AG04450 (cell line): ENCODE measurements at regions of chr14 and their contacts with region 1.

Region 1: DNA sequence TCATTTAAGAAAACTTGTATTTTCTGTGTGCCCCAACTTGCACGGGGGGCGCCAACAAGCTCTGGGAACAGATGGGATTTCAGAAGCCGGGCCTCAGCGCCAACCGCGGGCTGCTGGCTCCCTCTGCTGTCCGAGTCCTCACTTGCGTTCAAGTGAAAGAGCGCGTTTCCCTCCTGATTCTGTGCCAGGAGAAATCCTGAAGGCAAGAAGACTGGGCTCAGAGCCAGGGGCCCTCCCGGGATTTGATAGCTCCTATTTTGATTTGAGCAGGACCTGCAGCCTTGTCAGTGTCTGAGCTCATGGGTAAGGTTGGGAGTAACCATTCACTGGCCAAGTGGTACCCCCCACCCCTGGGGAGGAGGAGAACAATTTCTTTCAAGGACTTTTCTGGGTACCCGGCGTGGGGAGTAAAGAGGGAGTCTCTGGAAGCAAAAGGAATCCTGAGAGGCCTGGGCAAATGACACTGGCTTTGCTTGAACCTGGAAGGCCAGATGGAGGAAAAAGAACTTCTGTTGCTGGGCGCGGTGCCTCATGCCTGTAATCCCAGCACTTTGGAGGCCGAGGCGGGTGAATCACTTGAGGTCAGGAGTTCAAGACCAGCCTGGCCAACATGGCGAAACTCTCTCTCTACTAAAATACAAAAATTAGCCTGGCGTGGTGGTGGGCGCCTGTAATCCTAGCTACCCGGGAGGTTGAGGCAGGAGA is 179.0 kb upstream of the RGS6 start:
- DNase-seq: peak; percentile 80
- H3K4me3 ChIP-seq: no peak overlapping the region
- H3K27ac ChIP-seq: peak overlapping the region; percentile 11
- H3K27me3 ChIP-seq: no peaks in the 10 kb centered on the region
- CTCF ChIP-seq: peak; percentile 95

Region 2: DNA sequence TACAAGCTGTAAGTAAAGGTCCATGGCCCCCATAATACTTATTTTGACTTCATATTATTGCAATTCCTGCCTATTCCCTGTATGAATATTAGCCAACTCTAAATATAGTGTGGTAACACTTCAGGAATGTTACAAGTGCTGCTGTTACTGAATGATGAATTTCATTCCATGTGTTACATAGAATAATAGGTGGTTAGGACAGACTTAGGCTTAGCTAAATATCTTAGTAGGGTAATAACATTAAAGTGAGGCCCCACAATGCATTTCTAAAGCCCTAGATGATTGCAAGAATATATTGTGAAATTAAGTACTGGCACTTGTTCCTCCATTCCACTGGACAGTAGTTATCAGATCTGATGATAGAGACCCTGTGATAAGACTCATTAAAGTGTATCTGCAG is 663.3 kb before region 1 on chr14:
- CTCF ChIA-PET with region 1: interaction called, 10 read pairs
- POLR2A ChIA-PET with region 1: no interaction called
- DNase-seq: no peak
- H3K4me3 ChIP-seq: no peak overlapping the region
- H3K27ac ChIP-seq: no peak overlapping the region
- H3K27me3 ChIP-seq: no peaks in the 10 kb centered on the region
- CTCF ChIP-seq: no peak

Region 3: GRCh38 chr14:71113376-71113775 is 639.9 kb before region 1 on chr14:
- CTCF ChIA-PET with region 1: interaction called, 21 read pairs
- POLR2A ChIA-PET with region 1: no interaction called
- DNase-seq: peak; percentile 49
- H3K4me3 ChIP-seq: no peak overlapping the region
- H3K27ac ChIP-seq: no peak overlapping the region
- H3K27me3 ChIP-seq: no peaks in the 10 kb centered on the region
- CTCF ChIP-seq: no peak

Region 4: DNA sequence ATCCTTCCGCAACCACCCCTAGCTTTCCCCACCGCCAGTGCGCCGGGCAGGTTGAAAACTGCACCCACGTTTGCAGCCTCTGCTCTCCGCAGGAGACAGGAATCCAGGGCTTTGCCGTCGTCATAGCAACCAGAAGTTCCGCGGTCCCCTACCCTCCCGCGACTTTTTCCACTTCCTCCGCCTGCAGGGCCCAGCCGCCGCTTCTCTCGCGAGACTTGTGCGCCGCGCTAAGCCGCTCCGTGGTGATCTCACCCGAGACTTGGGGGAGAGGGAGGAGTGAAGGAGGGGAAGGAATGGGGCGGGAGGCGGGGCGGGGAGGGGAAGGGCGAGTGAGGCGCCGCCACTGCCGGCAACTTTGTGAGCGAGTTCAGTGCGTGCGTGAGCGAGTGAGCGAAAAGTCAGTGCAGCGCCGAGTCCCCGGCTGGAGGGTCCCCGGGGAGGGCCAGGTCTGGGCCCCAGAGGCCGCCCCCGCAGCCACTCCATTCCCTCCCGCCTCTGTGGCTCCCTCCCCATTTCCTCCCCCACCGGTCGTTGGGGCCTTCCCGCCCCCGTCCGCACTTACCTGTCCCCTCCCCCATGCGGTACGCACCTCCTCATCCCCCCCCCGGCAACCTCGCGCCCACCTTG is 433.1 kb before region 1 on chr14:
- CTCF ChIA-PET with region 1: interaction called, 15 read pairs
- POLR2A ChIA-PET with region 1: no interaction called
- DNase-seq: peak; percentile 99
- H3K4me3 ChIP-seq: peak within 1 kb of the TSS; percentile 91
- H3K27ac ChIP-seq: peak within 1 kb of the TSS; percentile 85
- H3K27me3 ChIP-seq: no peaks in the 10 kb centered on the region
- CTCF ChIP-seq: no peak

Region 5: DNA sequence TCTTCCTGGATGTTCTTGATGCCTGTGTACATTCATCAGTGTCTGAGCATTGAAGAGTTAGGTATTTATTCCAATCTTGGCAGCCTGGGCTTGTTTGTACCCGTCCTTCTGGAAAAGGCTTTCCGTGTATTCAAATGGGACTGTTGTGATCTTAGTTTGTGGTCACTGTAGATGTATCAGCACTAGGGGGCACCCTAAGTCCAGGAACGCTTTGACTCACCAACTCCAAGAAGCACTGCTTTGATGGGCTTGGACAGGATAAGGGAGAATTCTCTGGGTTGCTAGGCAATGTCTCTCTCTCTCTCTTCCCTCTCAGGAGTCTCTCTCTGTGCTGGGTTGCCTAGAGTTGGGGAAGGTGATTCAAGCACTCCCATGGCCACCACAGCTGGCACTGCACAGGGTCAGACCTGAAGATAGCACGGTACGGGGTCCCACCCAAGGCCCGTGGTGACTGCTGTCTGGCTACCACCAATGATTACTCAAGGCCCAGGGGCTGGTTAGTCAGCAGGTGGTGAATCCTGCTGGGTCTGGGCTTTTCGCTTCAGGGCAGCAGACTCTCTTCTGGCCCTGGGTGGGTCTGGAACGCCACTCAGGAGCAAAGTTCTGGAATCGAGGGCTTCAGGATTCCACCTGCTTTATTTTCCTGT is 32.2 kb before region 1 on chr14:
- CTCF ChIA-PET with region 1: interaction called, 18 read pairs
- POLR2A ChIA-PET with region 1: no interaction called
- DNase-seq: no peak
- H3K4me3 ChIP-seq: no peak overlapping the region
- H3K27ac ChIP-seq: no peak overlapping the region
- H3K27me3 ChIP-seq: no peaks in the 10 kb centered on the region
- CTCF ChIP-seq: peak; percentile 78

Region 6: DNA sequence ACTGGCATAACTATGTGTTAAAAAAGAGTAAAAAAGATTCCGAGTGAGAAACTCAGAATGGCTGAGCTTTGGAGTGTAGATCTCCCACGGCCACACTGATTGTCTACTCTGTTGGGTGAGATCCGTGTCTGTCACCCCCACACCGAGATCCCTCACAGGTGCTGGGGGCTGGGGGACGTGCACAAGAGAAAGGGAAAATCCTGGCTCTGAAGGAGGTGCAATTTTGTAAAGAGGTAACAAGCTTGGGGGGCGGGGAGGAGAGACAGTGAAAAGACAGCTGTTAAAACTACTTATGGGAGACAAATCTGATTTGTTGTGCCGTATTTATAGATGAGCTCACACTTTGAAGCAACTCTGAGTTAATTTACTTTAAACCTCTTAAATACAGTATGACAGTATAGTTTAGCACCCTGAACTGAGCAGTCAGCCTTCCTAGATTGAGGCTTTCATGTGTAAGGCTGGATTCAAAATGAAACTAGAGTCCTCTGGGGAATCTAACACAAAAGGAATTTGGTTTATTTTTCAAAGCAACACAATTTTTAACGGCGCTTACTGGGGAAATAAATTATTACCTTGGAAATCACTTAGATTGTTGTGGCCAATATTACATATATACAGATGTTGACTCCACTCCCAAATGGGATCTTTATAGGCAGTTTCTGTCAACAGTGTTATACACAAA is 11.6 kb after region 1 on chr14:
- CTCF ChIA-PET with region 1: interaction called, 16 read pairs
- POLR2A ChIA-PET with region 1: no interaction called
- DNase-seq: no peak
- H3K4me3 ChIP-seq: peak overlapping the region; percentile 31
- H3K27ac ChIP-seq: no peak overlapping the region
- H3K27me3 ChIP-seq: no peaks in the 10 kb centered on the region
- CTCF ChIP-seq: no peak

Region 7: DNA sequence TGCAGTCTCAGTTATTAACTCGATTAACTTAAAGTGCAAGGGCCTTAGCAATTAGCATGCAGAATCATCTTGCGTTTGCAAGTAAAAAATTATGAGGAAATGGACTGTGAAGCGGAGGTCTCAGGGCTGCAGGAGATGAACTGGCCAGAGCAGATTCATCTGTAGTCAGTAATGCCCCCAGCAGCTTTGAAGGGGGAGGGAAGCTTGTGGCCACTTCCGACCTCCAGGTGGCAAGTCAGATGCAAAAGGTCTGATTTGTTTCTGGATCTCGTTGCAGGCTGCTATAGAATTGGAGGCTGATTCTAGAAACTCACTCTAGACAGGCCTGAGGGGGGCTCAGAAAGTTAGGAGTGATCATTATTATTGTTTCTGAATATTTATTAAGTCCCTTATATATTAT is 71.5 kb after region 1 on chr14:
- CTCF ChIA-PET with region 1: no interaction called
- POLR2A ChIA-PET with region 1: no interaction called
- DNase-seq: no peak
- H3K4me3 ChIP-seq: no peak overlapping the region
- H3K27ac ChIP-seq: no peak overlapping the region
- H3K27me3 ChIP-seq: peaks cover 3% of the 10 kb centered on the region
- CTCF ChIP-seq: no peak

Region 8: GRCh38 chr14:71855399-71856036 is 102.2 kb after region 1 on chr14:
- CTCF ChIA-PET with region 1: interaction called, 108 read pairs
- POLR2A ChIA-PET with region 1: no interaction called
- DNase-seq: peak; percentile 49
- H3K4me3 ChIP-seq: no peak overlapping the region
- H3K27ac ChIP-seq: no peak overlapping the region
- H3K27me3 ChIP-seq: no peaks in the 10 kb centered on the region
- CTCF ChIP-seq: peak; percentile 86